PC-9 (cell line): ENCODE measurements at regions of chr3 and their contacts with region 1.

Region 1: GRCh38 chr3:139561959-139562676 is 22.6 kb upstream of the RBP1 start:
- DNase-seq: peak; percentile 47 to 55
- H3K4me3 ChIP-seq: no peak overlapping the region
- H3K27ac ChIP-seq: no peak overlapping the region
- H3K4me1 ChIP-seq: peaks cover 33% of the 10 kb centered on the region
- H3K27me3 ChIP-seq: no peaks in the 10 kb centered on the region
- CTCF ChIP-seq: peak; percentile 83

Region 2: DNA sequence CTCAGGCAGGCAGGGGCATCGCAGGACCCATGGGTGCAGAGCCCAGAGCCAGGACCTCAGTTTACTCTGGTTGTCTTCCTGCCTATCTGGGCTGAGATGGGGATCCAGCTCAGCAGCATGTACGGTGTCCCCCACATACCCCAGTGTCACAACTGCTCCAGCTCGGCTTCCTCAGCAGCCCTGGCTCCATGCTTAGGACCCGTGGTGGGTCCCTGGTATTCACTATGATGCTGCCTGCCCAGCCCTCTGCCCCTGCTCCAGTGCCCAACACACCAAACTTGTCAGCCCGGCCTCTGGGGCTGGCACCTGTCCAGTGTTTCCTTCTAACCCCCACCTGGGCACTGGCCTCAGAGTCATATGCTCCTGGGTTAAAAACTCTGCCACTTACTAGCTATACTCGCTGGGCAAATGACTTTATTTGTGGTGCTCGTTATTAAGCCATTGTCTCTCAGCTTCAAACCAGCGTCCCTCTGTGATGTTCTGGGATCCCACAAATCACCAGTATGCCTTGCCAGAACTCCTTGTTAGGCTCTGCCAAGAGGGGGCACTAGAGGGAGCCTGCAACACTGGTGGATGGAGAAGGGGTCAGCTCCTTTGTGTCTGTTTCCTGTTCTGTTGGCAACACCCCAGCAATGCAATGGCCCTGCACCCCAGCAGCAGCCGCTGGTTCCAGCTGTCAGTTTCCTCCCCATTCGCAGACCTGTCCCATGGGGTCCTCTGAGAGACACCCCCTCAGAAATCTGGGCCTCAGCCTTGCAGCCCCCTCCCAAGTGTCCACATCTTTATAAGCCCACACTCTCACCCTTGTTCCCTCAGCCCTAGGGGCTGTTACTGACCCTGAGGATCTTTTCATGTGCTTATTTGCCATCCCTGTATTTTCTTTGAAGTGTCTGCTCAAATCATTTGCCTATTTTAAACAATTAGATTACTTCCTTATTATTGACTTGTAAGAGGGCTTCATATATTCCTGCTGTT is 242.4 kb before region 1 on chr3:
- CTCF ChIA-PET with region 1: no interaction called
- POLR2A ChIA-PET with region 1: interaction called, 11 read pairs
- intact Hi-C with region 1: no loop called
- DNase-seq: no peak
- H3K4me3 ChIP-seq: no peak overlapping the region
- H3K27ac ChIP-seq: no peak overlapping the region
- H3K4me1 ChIP-seq: peaks cover 32% of the 10 kb centered on the region
- H3K27me3 ChIP-seq: no peaks in the 10 kb centered on the region
- CTCF ChIP-seq: peak; percentile 40; the same call in 1 of the 2 replicates

Region 3: DNA sequence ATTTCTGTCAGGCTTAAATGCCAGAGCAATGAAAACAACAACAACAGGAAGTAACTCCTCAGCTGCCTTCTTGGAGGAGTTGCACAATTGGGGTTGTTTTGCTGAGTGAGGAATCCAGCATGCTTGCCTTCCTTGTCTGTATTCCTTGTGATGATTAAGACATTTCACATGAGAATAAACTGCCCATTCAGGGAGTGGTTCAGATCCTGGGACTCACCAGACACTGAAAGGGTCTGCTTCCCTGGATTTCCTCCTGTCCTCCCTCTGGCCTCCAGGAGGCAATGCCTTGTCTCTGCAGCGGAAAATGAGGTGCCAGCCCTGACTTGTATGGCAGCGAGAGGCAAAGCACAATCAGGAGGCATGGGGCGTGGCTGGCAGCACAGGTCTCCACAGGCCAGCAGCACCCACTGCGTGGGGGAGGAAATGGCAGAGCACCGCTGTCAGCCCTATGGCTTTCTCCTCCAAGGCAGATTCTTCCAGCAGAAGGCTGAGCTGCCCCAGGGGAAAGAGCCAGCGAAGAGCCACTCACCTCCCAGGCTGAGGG is 127.3 kb before region 1 on chr3:
- CTCF ChIA-PET with region 1: interaction called, 3 read pairs
- POLR2A ChIA-PET with region 1: no interaction called
- intact Hi-C with region 1: loop called (anchors 2 kb)
- DNase-seq: peak; percentile 34 to 86
- H3K4me3 ChIP-seq: no peak overlapping the region
- H3K27ac ChIP-seq: peak overlapping the region; percentile 48
- H3K4me1 ChIP-seq: peaks cover 17% of the 10 kb centered on the region
- H3K27me3 ChIP-seq: no peaks in the 10 kb centered on the region
- CTCF ChIP-seq: no peak

Region 4: GRCh38 chr3:139519998-139520737 is 42.0 kb before region 1 on chr3:
- CTCF ChIA-PET with region 1: interaction called, 4 read pairs
- POLR2A ChIA-PET with region 1: no interaction called
- intact Hi-C with region 1: loop called (anchors 1 kb)
- DNase-seq: peak in 1 of 2 experiments; percentile 23
- H3K4me3 ChIP-seq: no peak overlapping the region
- H3K27ac ChIP-seq: no peak overlapping the region
- H3K4me1 ChIP-seq: no peaks in the 10 kb centered on the region
- H3K27me3 ChIP-seq: no peaks in the 10 kb centered on the region
- CTCF ChIP-seq: peak; percentile 62

Region 5: DNA sequence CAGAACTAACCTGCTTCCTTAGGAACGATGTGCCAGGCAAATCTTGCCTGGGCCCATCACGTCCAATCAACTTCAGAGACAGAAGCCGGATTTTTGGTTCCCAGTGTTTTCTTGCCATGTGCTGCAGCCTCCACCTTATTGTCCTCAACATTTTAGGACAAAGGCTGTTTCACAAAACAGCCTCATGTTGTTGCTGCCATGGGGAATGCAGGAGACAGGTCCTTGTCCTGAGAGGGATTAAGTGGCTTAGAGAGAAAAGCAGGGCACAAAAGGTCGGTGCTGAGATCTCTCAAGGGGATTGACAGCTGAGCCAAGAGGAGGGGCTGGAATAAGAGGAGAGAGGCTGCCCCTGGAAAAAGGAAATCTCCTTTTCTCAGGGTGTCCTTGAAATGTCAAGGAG is 127.0 kb after region 1 on chr3:
- CTCF ChIA-PET with region 1: no interaction called
- POLR2A ChIA-PET with region 1: no interaction called
- intact Hi-C with region 1: no loop called
- DNase-seq: no peak
- H3K4me3 ChIP-seq: no peak overlapping the region
- H3K27ac ChIP-seq: no peak overlapping the region
- H3K4me1 ChIP-seq: no peaks in the 10 kb centered on the region
- H3K27me3 ChIP-seq: peaks cover 12% of the 10 kb centered on the region
- CTCF ChIP-seq: no peak

Region 6: GRCh38 chr3:140863580-140864009 is 1301.5 kb after region 1 on chr3:
- CTCF ChIA-PET with region 1: no interaction called
- POLR2A ChIA-PET with region 1: no interaction called
- intact Hi-C with region 1: loop called (anchors 5 kb)
- DNase-seq: peak; percentile 47 to 53
- H3K4me3 ChIP-seq: no peak overlapping the region
- H3K27ac ChIP-seq: no peak overlapping the region
- H3K4me1 ChIP-seq: no peaks in the 10 kb centered on the region
- H3K27me3 ChIP-seq: no peaks in the 10 kb centered on the region
- CTCF ChIP-seq: peak; percentile 75